ENCODE measurements at regions of chr20 and their contacts with region 1.

Region 1: DNA sequence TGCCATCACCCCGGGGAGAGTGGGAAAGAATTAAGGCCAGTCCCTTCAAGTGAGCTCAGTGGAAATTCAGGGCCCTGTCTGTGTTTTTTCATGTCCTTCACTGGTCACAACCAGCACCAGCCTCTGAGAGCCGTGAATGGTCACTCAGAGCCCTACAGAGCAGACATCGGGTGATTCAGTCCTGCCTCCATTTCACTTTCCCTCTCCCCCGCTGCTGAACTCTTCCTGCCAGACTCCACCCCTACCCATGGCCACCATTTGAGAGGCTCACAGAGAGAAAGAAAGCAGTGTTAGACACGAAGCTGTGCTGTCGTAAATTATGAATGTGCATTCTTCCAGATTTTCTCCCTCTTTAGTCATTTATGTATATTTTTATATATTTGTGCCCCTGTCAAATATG is 5.4 kb downstream of the R3HDML start:
- DNase-seq: no peak
- H3K4me3 ChIP-seq: no peak overlapping the region
- H3K27ac ChIP-seq: no peak overlapping the region
- H3K4me1 ChIP-seq: no peaks in the 10 kb centered on the region
- H3K27me3 ChIP-seq: peaks cover 13% of the 10 kb centered on the region; the same call in 1 of the 2 replicates
- CTCF ChIP-seq: no peak

Region 2: GRCh38 chr20:44210422-44211176 is 131.6 kb before region 1 on chr20 and contains the start of gene OSER1:
- CTCF ChIA-PET with region 1: interaction called, 19 read pairs
- POLR2A ChIA-PET with region 1: no interaction called
- intact Hi-C with region 1: no loop called
- DNase-seq: peak; percentile 95 to 99
- H3K4me3 ChIP-seq: peak within 1 kb of the TSS; percentile 98
- H3K27ac ChIP-seq: peak within 1 kb of the TSS; percentile 89
- H3K4me1 ChIP-seq: peaks cover 44% of the 10 kb centered on the region
- H3K27me3 ChIP-seq: no peaks in the 10 kb centered on the region
- CTCF ChIP-seq: no peak
- total RNA-seq, gene OSER1: 113 and 136 TPM in 2 replicates

Region 3: DNA sequence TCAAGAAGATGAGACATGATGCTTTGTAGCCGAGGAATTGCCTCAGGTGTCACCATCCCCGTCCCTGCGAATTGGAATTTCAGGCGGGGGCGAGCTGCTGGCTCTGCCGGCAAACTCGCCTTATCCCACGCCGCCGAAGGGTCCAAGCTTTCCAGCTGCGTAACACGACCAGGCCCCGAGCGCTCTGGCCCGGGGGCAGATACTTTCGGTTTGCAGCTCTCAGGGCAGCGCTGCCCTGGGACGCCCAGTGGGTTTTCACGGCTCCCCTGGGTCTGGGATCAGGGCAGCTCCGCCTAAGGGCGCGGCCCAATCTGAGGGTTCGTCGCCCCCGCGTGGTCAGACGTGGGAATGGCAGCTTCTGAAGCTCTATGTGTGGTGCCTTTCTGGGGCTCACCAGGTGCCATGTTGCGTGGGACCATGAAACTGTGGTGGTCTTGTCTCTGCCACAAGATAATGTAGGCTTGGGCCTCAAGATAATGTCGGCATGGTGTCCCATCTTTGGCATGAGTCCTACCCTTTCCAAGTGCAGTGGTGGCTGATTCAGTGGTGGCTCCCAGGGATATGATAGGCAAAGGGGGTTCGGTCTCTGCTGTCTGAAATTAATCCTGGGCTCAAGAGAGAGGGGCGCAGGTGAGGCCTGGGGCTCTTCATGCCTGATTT is 1094.6 kb after region 1 on chr20:
- CTCF ChIA-PET with region 1: no interaction called
- POLR2A ChIA-PET with region 1: no interaction called
- intact Hi-C with region 1: no loop called
- DNase-seq: peak; percentile 70 to 89
- H3K4me3 ChIP-seq: peak overlapping the region; percentile 78
- H3K27ac ChIP-seq: no peak overlapping the region
- H3K4me1 ChIP-seq: peaks cover 14% of the 10 kb centered on the region
- H3K27me3 ChIP-seq: no peaks in the 10 kb centered on the region
- CTCF ChIP-seq: peak; percentile 98